ENCODE measurements at regions of chr13 and their contacts with region 1.

Region 1: GRCh38 chr13:48775804-48776203 is 122.1 kb downstream of the CYSLTR2 start:
- DNase-seq: no peak
- H3K4me3 ChIP-seq: no peak overlapping the region
- H3K27ac ChIP-seq: no peak overlapping the region
- H3K4me1 ChIP-seq: no peaks in the 10 kb centered on the region
- H3K27me3 ChIP-seq: no peaks in the 10 kb centered on the region
- CTCF ChIP-seq: no peak

Region 2: DNA sequence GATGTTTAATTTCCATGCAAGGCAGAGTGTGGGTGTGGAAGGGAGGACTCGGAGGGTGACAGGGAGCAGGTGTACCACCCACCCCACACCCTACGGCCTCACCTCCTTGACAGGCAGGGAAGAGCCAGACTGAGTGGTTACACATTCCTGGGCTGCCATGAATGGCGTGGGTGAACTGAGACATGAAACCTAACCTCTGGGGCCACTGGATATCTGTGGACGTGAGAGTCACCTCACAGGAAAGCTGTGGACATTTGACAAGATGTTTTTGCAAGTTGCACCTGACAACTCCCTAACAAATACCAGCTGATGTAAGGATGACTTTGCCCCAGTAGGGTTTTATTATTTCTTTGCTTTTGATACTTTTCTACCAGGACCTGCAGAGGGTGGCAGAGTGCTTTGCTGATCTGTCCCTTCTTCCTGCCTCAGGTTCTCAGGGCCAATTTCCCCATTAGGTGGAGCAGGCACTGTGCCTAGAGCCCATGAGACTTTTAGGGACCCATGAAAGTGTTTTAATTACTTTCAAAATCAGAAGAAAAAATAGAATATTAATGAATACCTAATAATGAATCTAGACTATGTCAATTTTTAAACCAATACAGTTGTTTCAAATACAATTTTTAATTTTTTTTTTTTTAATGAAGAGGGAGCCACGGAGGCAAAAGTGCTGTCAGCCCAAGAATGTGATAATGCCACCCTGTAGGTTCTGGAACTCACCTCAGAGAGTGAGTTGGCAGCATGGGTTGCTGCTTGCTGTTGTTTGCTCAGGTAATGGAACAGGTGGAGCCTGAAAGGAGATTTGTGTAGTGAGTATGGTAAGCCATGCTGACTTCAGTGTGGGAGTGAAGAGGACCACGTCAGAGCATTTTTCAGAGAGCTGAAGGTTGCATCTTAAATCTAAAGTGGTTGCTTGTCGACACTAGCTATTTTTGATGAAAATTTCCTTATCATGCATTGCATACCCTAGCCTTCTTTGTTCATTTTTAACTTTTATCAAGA is 180.1 kb before region 1 on chr13:
- intact Hi-C with region 1: loop called (anchors 10 kb)
- DNase-seq: peak in 4 of 5 donors; percentile 59 to 88 (median 70)
- H3K4me3 ChIP-seq: no peak overlapping the region
- H3K27ac ChIP-seq: no peak overlapping the region
- H3K4me1 ChIP-seq: peaks cover 2 to 8% (median 5%) of the 10 kb centered on the region in 3 donors
- H3K27me3 ChIP-seq: no peaks in the 10 kb centered on the region
- CTCF ChIP-seq: peak; percentile 83

Region 3: GRCh38 chr13:49071341-49071937 is 295.6 kb after region 1 on chr13:
- intact Hi-C with region 1: no loop called
- DNase-seq: no peak
- H3K4me3 ChIP-seq: no peak overlapping the region
- H3K27ac ChIP-seq: no peak overlapping the region
- H3K4me1 ChIP-seq: no peaks in the 10 kb centered on the region
- H3K27me3 ChIP-seq: no peaks in the 10 kb centered on the region
- CTCF ChIP-seq: no peak

Measured in kidney (tissue), 22 donors.